ENCODE measurements at regions of chr18 and their contacts with region 1.

Region 1: GRCh38 chr18:74063023-74063422 is 84.6 kb downstream of the FBXO15 start:
- DNase-seq: peak; percentile 25
- H3K4me3 Mint-ChIP-seq: no peak overlapping the region
- H3K27ac Mint-ChIP-seq: peak overlapping the region; percentile 75
- H3K4me1 Mint-ChIP-seq: peaks cover 51% of the 10 kb centered on the region
- H3K27me3 Mint-ChIP-seq: no peaks in the 10 kb centered on the region

Region 2: DNA sequence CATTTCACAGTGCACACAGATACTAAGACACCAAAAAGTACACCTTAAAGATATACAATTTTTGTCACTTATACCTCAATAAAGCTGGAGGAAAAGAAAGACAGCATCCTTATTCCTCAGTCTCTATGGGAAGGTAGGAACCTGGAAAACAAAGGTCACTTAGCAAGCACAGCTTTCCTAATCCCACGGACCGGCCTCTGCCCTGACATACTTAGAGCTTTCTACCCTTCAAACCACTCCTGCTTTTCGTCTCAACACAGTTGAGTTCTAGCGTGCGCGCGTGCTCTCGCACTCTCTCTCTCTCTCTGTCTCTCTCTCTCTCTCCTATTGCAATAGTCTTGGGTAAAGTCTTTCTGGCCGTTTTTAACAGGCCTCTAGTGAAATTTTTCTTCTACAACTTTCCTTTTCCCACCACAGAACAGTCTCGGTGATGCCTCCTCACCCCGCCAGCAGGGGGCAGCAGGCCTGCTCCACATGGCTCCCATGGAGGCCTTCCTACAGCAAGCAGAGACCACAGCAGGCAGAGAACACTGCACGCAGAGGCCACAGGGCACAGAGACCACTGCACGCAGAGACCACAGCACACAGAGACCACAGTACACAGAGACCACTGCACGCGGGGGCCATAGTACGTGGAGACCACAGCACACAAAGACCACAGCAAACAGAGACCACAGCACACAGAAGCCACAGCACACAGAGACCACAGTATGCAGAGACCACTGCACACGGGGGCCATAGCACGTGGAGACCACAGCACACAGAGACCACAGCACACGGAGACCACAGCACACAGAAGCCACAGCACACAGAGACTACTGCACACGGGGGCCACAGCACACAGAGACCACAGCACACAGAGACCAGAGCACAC is 22.3 kb before region 1 on chr18:
- intact Hi-C with region 1: loop called (anchors 1 kb)
- DNase-seq: peak; percentile 56
- H3K4me3 Mint-ChIP-seq: no peak overlapping the region
- H3K27ac Mint-ChIP-seq: no peak overlapping the region
- H3K4me1 Mint-ChIP-seq: no peaks in the 10 kb centered on the region
- H3K27me3 Mint-ChIP-seq: no peaks in the 10 kb centered on the region

Region 3: GRCh38 chr18:74139888-74140287 is 76.9 kb after region 1 on chr18:
- intact Hi-C with region 1: loop called (anchors 2 kb)
- DNase-seq: no peak
- H3K4me3 Mint-ChIP-seq: peak overlapping the region; percentile 67
- H3K27ac Mint-ChIP-seq: peak overlapping the region; percentile 92
- H3K4me1 Mint-ChIP-seq: peaks cover 36% of the 10 kb centered on the region
- H3K27me3 Mint-ChIP-seq: peaks cover under 1% of the 10 kb centered on the region

Region 4: GRCh38 chr18:74147779-74148542 is 84.9 kb after region 1 on chr18 and contains the starts of genes FBXO15 and TIMM21:
- intact Hi-C with region 1: loop called (anchors 2 kb)
- DNase-seq: peak; percentile 95
- H3K4me3 Mint-ChIP-seq: peak within 1 kb of the TSS; percentile 99
- H3K27ac Mint-ChIP-seq: peak within 1 kb of the TSS; percentile 98
- H3K4me1 Mint-ChIP-seq: peaks cover 45% of the 10 kb centered on the region
- H3K27me3 Mint-ChIP-seq: peaks cover 4% of the 10 kb centered on the region
- total RNA-seq, gene FBXO15: 0.91 and 1.1 TPM in 2 replicates
- total RNA-seq, gene TIMM21: 48.3 and 50.0 TPM in 2 replicates

Region 5: DNA sequence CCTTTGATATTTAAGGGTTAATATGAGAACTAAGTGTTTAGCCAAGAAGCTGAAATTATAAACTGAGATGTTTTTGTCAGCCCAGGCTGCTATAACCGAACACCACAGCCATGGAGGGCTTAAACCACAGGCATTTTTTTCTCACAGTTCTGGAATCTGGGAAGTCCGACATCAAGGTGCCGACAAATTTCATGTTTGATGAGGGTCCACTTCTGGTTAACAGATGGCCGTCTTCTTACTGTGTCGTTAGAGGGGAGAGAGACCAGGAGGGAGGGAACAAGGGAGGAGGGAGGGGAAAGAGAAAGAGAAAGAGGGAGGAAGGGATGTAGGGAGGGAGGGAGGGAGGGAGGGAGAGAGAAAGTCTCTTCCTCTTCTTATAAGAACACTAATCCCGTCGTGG is 426.7 kb after region 1 on chr18:
- intact Hi-C with region 1: no loop called
- DNase-seq: no peak
- H3K4me3 Mint-ChIP-seq: no peak overlapping the region
- H3K27ac Mint-ChIP-seq: no peak overlapping the region
- H3K4me1 Mint-ChIP-seq: peaks cover 16% of the 10 kb centered on the region
- H3K27me3 Mint-ChIP-seq: peaks cover 22% of the 10 kb centered on the region

Region 6: GRCh38 chr18:74597662-74598349 is 534.8 kb after region 1 on chr18 and contains the start of gene ZNF407:
- intact Hi-C with region 1: loop called (anchors 5 kb)
- DNase-seq: peak; percentile 85
- H3K4me3 Mint-ChIP-seq: peak within 1 kb of the TSS; percentile 96
- H3K27ac Mint-ChIP-seq: peak within 1 kb of the TSS; percentile 98
- H3K4me1 Mint-ChIP-seq: peaks cover 44% of the 10 kb centered on the region
- H3K27me3 Mint-ChIP-seq: no peaks in the 10 kb centered on the region
- total RNA-seq, gene ZNF407: 18.3 TPM in 2 replicates

Measured in activated T-helper 2 cell treated with anti-CD3 and anti-CD28 coated beads, Interferon-gamma antibody, Interleukin-2, Interleukin-4, amounts not matched to agents 10 μg/mL and 5 μg/mL and 100 μg/mL, durations not matched to agents 14 hours and 24 hours and 36 hours (primary cell).